Activated T-helper 2 cell treated with anti-CD3 and anti-CD28 coated beads, Interferon-gamma antibody, Interleukin-2, Interleukin-4, amounts not matched to agents 10 μg/mL and 5 μg/mL and 100 μg/mL, durations not matched to agents 14 hours and 24 hours and 36 hours (primary cell): ENCODE measurements at regions of chr19 and their contacts with region 1.

Region 1: GRCh38 chr19:11924886-11925650 is at the start of gene ZNF700:
- DNase-seq: peak; percentile 91
- H3K4me3 Mint-ChIP-seq: peak within 1 kb of the TSS; percentile 95
- H3K27ac Mint-ChIP-seq: peak within 1 kb of the TSS; percentile 98
- H3K4me1 Mint-ChIP-seq: peaks cover 23% of the 10 kb centered on the region
- H3K27me3 Mint-ChIP-seq: peaks cover 2% of the 10 kb centered on the region
- total RNA-seq, gene ZNF700: 14.5 and 14.6 TPM in 2 replicates

Region 2: GRCh38 chr19:11881151-11881800 is 43.8 kb before region 1 on chr19:
- intact Hi-C with region 1: loop called (anchors 2 kb)
- DNase-seq: peak; percentile 48
- H3K4me3 Mint-ChIP-seq: no peak overlapping the region
- H3K27ac Mint-ChIP-seq: no peak overlapping the region
- H3K4me1 Mint-ChIP-seq: peaks cover 1% of the 10 kb centered on the region
- H3K27me3 Mint-ChIP-seq: peaks cover 3% of the 10 kb centered on the region

Region 3: GRCh38 chr19:11902228-11902627 is 22.8 kb before region 1 on chr19:
- intact Hi-C with region 1: no loop called
- DNase-seq: no peak
- H3K4me3 Mint-ChIP-seq: no peak overlapping the region
- H3K27ac Mint-ChIP-seq: no peak overlapping the region
- H3K4me1 Mint-ChIP-seq: no peaks in the 10 kb centered on the region
- H3K27me3 Mint-ChIP-seq: no peaks in the 10 kb centered on the region

Region 4: DNA sequence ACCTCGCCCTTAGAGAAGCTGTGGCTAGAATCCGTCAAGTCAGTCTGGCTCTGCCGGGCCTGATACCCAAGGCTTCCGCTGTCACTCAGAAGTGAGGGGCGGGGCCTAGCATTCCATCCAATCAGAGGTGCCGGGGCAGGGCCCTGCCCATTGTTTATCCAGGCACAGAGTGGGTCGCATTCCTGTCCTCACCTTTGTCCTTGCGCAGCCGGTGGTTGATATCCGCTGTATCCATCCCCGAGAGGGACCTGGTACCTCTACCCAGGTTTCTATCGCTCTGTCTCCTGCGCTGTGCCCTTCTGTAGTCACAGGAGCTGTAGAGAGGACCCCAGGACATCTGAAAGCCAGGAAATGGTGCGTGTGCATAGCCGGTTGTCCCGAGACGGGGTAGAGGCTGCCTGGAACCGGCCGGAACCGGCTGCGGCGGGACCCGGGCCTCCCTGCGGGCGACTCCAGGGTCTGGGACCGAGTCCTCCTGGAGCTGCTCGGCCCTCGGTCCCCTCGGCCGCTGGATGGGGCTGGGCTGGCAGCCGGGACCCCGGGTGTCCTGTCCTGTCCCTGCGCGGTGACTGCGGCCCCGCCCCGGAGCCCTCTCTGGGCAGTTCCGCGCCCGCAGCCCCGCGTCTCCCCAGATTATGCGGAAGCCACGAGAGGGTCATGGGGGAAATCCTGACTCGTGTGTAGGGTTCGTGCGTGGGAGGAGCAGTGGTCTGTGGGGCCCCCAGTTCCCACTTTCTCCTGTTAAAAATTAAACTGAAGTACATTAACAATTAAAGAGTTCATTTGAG is 40.0 kb after region 1 on chr19 and contains the start of gene ZNF763:
- intact Hi-C with region 1: loop called (anchors 2 kb)
- DNase-seq: peak; percentile 80
- H3K4me3 Mint-ChIP-seq: peak within 1 kb of the TSS; percentile 83
- H3K27ac Mint-ChIP-seq: peak within 1 kb of the TSS; percentile 82
- H3K4me1 Mint-ChIP-seq: peaks cover 17% of the 10 kb centered on the region
- H3K27me3 Mint-ChIP-seq: no peaks in the 10 kb centered on the region
- total RNA-seq, gene ZNF763: 0.43 and 0.74 TPM in 2 replicates

Region 5: DNA sequence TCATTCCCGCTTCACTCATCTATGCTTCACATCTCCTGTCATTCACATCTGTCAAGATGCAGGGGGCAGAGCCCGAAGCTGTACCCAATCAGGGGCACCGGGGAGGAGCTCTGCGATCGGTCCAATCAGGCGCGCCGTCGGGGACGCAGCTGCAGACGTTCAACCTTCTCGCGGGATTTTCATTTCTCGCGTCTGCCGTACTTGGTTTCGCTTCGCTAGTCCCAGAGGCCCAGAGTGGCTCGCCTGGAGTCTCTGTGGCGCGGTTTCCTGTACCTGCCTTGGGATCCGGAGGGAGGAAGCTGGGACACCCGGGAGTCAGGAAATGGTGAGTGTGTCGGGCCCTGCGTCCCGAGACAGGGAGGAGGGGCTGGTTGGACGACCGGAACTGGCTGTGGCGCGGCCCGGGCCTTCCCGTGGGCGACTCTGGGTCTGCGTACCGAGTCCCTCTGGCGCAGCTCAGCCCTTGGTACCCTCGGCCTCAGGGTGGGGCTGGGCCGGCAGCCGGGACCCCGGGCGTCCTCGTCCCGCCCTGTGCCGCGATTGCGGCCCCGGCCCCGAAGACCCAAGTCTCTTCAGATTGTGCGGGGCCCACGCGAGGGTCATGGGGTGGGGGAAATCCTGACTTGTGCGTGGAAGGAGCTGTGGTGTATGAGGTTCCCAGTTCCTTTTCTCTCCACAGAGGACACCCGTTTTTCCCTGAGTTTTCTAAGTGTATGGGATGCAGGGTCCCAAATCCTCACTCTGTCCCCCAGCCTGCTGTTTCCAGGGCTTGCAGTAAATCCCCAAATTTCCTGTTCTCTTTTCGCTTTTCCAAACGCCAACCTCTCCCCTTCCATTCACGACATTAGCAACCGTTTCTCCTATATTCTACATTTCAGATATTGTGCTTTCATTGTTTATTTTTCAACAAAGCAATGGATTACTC is 238.1 kb after region 1 on chr19 and contains the start of gene ZNF136:
- intact Hi-C with region 1: loop called (anchors 5 kb)
- DNase-seq: peak; percentile 93
- H3K4me3 Mint-ChIP-seq: peak within 1 kb of the TSS; percentile 100
- H3K27ac Mint-ChIP-seq: peak within 1 kb of the TSS; percentile 94
- H3K4me1 Mint-ChIP-seq: peaks cover 24% of the 10 kb centered on the region
- H3K27me3 Mint-ChIP-seq: no peaks in the 10 kb centered on the region
- total RNA-seq, gene ZNF136: 7.7 and 9.7 TPM in 2 replicates